Activated T-helper 1 cell treated with anti-CD3 and anti-CD28 coated beads, Interleukin-12 subunit alpha, Interleukin-12 subunit beta, Interleukin-2, Interleukin-4 antibody, amounts not matched to agents 30 ng/mL and 10 ng/mL and 1 ng/mL, durations not matched to agents 14 hours and 24 hours and 36 hours (primary cell): ENCODE measurements at regions of chr2 and their contacts with region 1.

Region 1: DNA sequence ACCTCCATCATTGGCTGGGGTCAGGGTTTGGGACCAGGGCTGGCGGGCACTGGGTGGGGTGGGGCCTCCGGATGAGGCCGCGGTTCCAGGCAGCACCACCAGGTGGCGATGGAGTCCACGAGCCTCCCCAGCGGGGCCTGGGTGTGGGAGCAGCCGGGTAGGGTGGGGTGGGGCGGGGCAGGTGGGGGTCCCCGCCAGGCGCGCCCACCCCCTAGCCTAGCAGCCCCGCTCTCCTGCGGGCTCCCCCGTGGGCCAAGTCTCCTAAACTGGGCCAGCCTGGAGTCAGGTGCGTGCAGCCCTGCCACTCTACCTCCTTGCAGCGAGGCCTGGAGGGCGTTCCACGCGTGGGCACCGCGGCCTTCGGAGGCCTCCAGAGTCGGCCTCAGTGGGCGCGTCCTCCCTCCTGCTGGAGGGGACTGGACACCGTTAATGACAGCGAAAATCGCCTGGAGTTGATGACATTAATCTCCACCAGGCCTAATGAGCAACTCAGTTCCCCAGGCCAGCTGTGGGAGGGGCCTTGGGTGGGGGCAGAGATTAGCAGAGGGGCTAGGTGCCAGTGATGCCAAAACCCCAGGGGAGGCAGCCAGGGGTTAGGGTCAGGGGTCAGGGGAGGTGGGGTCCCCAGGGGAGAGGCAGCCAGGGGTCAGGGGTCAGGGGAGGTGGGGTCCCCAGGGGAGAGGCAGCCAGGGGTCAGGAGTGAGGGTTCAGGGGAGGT is 187.6 kb downstream of the TWIST2 start:
- DNase-seq: peak; percentile 40
- H3K4me3 Mint-ChIP-seq: no peak overlapping the region
- H3K27ac Mint-ChIP-seq: no peak overlapping the region
- H3K4me1 Mint-ChIP-seq: no peaks in the 10 kb centered on the region
- H3K27me3 Mint-ChIP-seq: peaks cover 20% of the 10 kb centered on the region

Region 2: GRCh38 chr2:238831177-238831576 is 204.3 kb before region 1 on chr2:
- intact Hi-C with region 1: no loop called
- DNase-seq: no peak
- H3K4me3 Mint-ChIP-seq: no peak overlapping the region
- H3K27ac Mint-ChIP-seq: no peak overlapping the region
- H3K4me1 Mint-ChIP-seq: no peaks in the 10 kb centered on the region
- H3K27me3 Mint-ChIP-seq: peaks cover 8% of the 10 kb centered on the region

Region 3: GRCh38 chr2:239648607-239649006 is 613.1 kb after region 1 on chr2:
- intact Hi-C with region 1: loop called (anchors 5 kb)
- DNase-seq: no peak
- H3K4me3 Mint-ChIP-seq: no peak overlapping the region
- H3K27ac Mint-ChIP-seq: no peak overlapping the region
- H3K4me1 Mint-ChIP-seq: no peaks in the 10 kb centered on the region
- H3K27me3 Mint-ChIP-seq: peaks cover 19% of the 10 kb centered on the region

Region 4: DNA sequence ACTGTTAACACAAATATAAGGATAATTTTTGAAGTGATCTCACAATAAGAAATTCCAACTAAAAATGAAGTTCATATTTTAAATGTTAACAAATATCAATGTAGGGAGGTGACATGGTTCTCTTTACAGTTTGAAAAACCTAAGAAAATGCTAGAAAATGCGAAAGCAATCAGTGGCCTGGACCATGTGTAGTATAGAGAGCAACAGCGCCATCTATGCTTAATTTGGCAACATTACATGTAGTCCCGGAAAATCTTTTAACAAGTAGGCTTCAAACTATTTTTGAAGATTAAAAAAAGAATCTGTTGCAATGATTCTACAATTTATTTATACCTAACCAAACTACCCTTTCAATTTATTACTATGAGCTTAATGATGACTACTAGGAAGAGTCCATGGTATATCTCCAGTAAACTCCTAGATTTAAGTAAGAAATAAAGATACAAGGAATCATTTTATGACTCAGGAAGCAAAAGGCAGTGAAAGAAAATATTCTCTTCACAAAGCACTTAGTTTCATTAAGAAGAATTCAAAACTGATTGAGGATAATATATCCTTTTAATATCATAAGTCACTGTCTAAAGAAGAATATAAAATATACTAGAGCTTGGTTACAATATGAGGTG is 956.3 kb after region 1 on chr2:
- intact Hi-C with region 1: no loop called
- DNase-seq: no peak
- H3K4me3 Mint-ChIP-seq: no peak overlapping the region
- H3K27ac Mint-ChIP-seq: no peak overlapping the region
- H3K4me1 Mint-ChIP-seq: no peaks in the 10 kb centered on the region
- H3K27me3 Mint-ChIP-seq: no peaks in the 10 kb centered on the region

Region 5: GRCh38 chr2:240143801-240144648 is 1108.5 kb after region 1 on chr2:
- intact Hi-C with region 1: loop called (anchors 1 kb)
- DNase-seq: peak; percentile 68
- H3K4me3 Mint-ChIP-seq: no peak overlapping the region
- H3K27ac Mint-ChIP-seq: no peak overlapping the region
- H3K4me1 Mint-ChIP-seq: no peaks in the 10 kb centered on the region
- H3K27me3 Mint-ChIP-seq: peaks cover 9% of the 10 kb centered on the region